Prostate gland (tissue), 2 donors: ENCODE measurements at regions of chr3 and their contacts with region 1.

Region 1: GRCh38 chr3:160739079-160739478 is 17.0 kb upstream of the PPM1L start:
- DNase-seq: peak; percentile 9
- H3K4me3 ChIP-seq: no peak overlapping the region
- H3K27ac ChIP-seq: no peak overlapping the region
- H3K4me1 ChIP-seq: no peaks in the 10 kb centered on the region
- H3K27me3 ChIP-seq: no peaks in the 10 kb centered on the region
- CTCF ChIP-seq: no peak
- POLR2A ChIP-seq: no peak

Region 2: DNA sequence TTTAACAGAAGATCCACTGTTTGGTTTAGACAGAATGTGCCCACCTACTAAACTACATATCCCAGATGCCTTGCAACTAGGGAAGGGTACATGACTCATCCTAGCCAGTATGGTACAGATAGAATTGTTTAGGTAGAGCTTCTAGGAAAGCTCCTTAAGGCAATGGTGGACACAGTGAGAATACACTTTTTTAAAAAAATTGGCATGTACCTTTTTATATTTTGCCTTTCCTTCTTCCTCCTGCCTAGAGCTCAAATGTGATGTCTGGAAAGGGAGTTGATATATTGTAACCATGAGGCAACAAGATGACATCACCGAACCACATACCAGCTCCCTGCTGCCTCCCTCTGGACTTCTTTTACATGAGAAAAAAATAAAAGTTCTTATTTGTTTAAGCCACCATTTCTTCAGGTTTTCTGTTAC is 528.3 kb before region 1 on chr3:
- intact Hi-C with region 1: no loop called
- DNase-seq: no peak
- H3K4me3 ChIP-seq: no peak overlapping the region
- H3K27ac ChIP-seq: no peak overlapping the region
- H3K4me1 ChIP-seq: no peaks in the 10 kb centered on the region
- H3K27me3 ChIP-seq: no peaks in the 10 kb centered on the region
- CTCF ChIP-seq: no peak
- POLR2A ChIP-seq: no peak

Region 3: GRCh38 chr3:160399125-160400029 is 339.7 kb before region 1 on chr3 and contains the starts of genes IFT80 and SMC4:
- intact Hi-C with region 1: loop called (anchors 10 kb)
- DNase-seq: peak; percentile 96
- H3K4me3 ChIP-seq: peak within 1 kb of the TSS; percentile 57 to 61
- H3K27ac ChIP-seq: peak within 1 kb of the TSS; percentile 92 to 93
- H3K4me1 ChIP-seq: no peaks in the 10 kb centered on the region
- H3K27me3 ChIP-seq: no peaks in the 10 kb centered on the region
- CTCF ChIP-seq: peak in 2 of 4 experiments; percentile 11 to 17
- POLR2A ChIP-seq: peak; percentile 49
- total RNA-seq, gene IFT80: 16.1 to 43.3 TPM
- total RNA-seq, gene SMC4: 13.8 to 40.4 TPM